ENCODE measurements at regions of chr22 and their contacts with region 1.

Region 1: DNA sequence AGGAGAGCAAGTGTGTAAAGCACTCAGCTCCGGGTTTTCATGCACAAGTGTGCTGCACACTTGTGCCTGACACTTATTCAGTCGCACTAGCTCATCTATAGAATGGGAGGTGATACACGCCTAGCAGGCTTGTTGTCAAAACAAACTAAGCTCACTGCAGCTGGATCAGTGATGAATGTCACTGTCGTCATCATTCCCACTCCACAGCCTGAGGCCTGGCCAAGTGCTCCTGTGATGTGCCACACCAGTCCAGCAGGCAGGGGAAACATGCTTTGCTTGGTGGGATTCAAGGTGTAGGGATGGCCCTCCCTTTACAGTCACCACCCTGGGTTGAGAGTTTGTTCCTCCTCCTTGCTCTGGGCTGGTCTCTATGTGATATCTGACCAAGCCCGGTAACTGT is 6.8 kb downstream of the MPST start:
- DNase-seq: no peak

Region 2: GRCh38 chr22:36252754-36253517 is 773.4 kb before region 1 on chr22 and contains the start of gene APOL1:
- intact Hi-C with region 1: no loop called
- DNase-seq: peak; percentile 79
- total RNA-seq, gene APOL1: 39.9 to 69.3 TPM

Region 3: GRCh38 chr22:36613958-36614357 is 412.4 kb before region 1 on chr22:
- intact Hi-C with region 1: no loop called
- DNase-seq: no peak

Region 4: GRCh38 chr22:36884349-36885117 is 141.8 kb before region 1 on chr22:
- intact Hi-C with region 1: no loop called
- DNase-seq: no peak

Region 5: GRCh38 chr22:36954211-36954891 is 72.0 kb before region 1 on chr22:
- intact Hi-C with region 1: no loop called
- DNase-seq: no peak

Region 6: DNA sequence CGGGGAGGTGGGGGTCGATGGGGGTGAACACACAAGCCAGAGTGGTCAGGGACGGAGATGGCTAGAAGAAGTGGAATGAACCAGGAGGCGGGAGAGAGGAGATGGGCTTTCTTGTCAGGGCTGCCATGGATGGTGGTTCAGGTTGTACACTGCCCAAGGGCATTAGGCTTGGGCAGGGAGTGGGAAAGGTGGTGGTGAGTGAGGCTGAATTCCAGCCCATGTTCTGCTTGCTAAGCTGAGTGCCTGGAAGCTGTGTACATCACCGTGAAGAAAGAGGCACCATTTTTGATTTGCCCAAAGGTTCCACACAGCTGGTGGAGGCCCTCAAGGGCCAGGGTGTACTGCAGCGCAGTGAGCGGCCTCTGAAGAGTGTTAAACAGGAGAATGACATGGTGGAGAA is 106.4 kb after region 1 on chr22:
- intact Hi-C with region 1: loop called in 1 of 2 experiments (anchors 1 kb)
- DNase-seq: no peak

Measured in posterior vena cava (tissue), 2 donors.